CD4-positive, alpha-beta memory T cell (primary cell): ENCODE measurements at regions of chr19 and their contacts with region 1.

Region 1: GRCh38 chr19:52527134-52527955 is at the start of gene ZNF808:
- DNase-seq: peak; percentile 91 to 97 (median 91)
- H3K4me3 ChIP-seq: peak within 1 kb of the TSS; percentile 78 to 98
- H3K4me3 Mint-ChIP-seq: peak within 1 kb of the TSS; percentile 96 to 100 (median 99)
- H3K27ac ChIP-seq: peak within 1 kb of the TSS; percentile 91
- H3K27ac Mint-ChIP-seq: peak within 1 kb of the TSS; percentile 94 to 99 (median 99)
- H3K4me1 ChIP-seq: peaks cover 19% of the 10 kb centered on the region
- H3K4me1 Mint-ChIP-seq: peaks cover 18 to 36% (median 26%) of the 10 kb centered on the region in 4 donors
- H3K27me3 ChIP-seq: no peaks in the 10 kb centered on the region
- H3K27me3 Mint-ChIP-seq: peaks cover 0 to 1% of the 10 kb centered on the region in 2 donors
- total RNA-seq, gene ZNF808: 61.7 to 65.2 TPM

Region 2: GRCh38 chr19:52464798-52465470 is 62.4 kb before region 1 on chr19:
- CTCF ChIA-PET with region 1: no interaction called
- POLR2A ChIA-PET with region 1: no interaction called
- intact Hi-C with region 1: no loop called
- DNase-seq: no peak
- H3K4me3 ChIP-seq: no peak overlapping the region
- H3K4me3 Mint-ChIP-seq: peak overlapping the region in 1 of 8 donors; percentile 5
- H3K27ac ChIP-seq: no peak overlapping the region
- H3K27ac Mint-ChIP-seq: no peak overlapping the region
- H3K4me1 ChIP-seq: no peaks in the 10 kb centered on the region
- H3K4me1 Mint-ChIP-seq: no peaks in the 10 kb centered on the region
- H3K27me3 ChIP-seq: no peaks in the 10 kb centered on the region
- H3K27me3 Mint-ChIP-seq: no peaks in the 10 kb centered on the region

Region 3: GRCh38 chr19:52570000-52570861 is 42.9 kb after region 1 on chr19 and contains the start of gene ZNF701:
- CTCF ChIA-PET with region 1: interaction called, 3 read pairs
- POLR2A ChIA-PET with region 1: no interaction called
- intact Hi-C with region 1: loop called (anchors 1 kb)
- DNase-seq: peak; percentile 95 to 96 (median 95)
- H3K4me3 ChIP-seq: peak within 1 kb of the TSS; percentile 89 to 96
- H3K4me3 Mint-ChIP-seq: peak within 1 kb of the TSS; percentile 91 to 98 (median 96)
- H3K27ac ChIP-seq: peak within 1 kb of the TSS; percentile 67
- H3K27ac Mint-ChIP-seq: peak within 1 kb of the TSS; percentile 83 to 99 (median 97)
- H3K4me1 ChIP-seq: peaks cover 16% of the 10 kb centered on the region
- H3K4me1 Mint-ChIP-seq: peaks cover 16 to 41% (median 34%) of the 10 kb centered on the region in 4 donors
- H3K27me3 ChIP-seq: no peaks in the 10 kb centered on the region
- H3K27me3 Mint-ChIP-seq: no peaks in the 10 kb centered on the region
- total RNA-seq, gene ZNF701: 51.1 to 51.7 TPM

Region 4: DNA sequence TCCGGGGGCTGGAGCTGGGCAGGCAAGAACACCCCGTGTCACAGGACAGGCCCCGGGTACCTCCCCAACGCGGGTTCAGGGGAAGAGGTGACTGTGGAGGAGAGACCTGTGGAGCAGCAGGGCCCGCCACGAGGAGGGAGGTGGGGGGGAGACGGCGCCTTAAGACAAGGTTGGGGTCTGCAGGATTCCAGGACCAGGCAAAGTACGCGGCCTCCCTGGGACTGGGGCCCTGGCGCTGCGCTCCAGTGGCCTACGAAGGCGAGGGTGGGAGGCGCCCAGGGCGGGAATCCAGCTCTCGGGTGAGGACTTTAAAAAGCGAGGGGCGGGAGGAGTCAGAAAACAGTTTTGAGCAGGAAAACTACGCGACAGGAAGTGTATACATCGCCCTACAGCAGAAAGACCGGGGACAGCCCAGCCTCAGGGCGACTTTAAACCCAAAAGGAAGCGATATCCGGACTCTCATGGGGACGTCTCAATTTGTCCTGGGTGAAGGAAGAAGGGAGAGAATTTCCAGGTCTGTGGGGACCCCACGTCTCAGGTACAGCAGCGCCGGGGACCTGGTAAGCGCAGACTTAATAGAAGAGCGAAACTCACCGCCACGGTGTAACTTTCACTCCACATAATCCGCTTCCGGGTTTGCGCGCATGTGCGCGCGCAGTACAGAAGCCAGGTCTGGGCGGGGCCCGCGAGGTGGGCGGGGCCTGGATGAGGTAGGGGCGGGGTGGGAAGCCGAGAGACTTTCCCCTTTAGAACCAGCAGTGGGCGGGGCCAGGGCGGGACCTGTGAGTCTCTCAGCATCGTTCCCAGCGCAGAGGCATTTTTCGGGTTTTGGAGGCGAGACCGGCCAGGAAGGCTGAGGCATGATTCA is 110.6 kb after region 1 on chr19 and contains the start of gene ZNF83:
- CTCF ChIA-PET with region 1: interaction called, 3 read pairs
- POLR2A ChIA-PET with region 1: no interaction called
- intact Hi-C with region 1: loop called (anchors 1 kb)
- DNase-seq: peak; percentile 85 to 95 (median 92)
- H3K4me3 ChIP-seq: peak within 1 kb of the TSS; percentile 72 to 98
- H3K4me3 Mint-ChIP-seq: peak within 1 kb of the TSS; percentile 91 to 99 (median 97)
- H3K27ac ChIP-seq: peak within 1 kb of the TSS; percentile 87
- H3K27ac Mint-ChIP-seq: peak within 1 kb of the TSS; percentile 90 to 99 (median 98)
- H3K4me1 ChIP-seq: peaks cover 20% of the 10 kb centered on the region
- H3K4me1 Mint-ChIP-seq: peaks cover 10 to 23% (median 16%) of the 10 kb centered on the region in 4 donors
- H3K27me3 ChIP-seq: no peaks in the 10 kb centered on the region
- H3K27me3 Mint-ChIP-seq: no peaks in the 10 kb centered on the region
- total RNA-seq, gene ZNF83: 128 to 130 TPM

Region 5: DNA sequence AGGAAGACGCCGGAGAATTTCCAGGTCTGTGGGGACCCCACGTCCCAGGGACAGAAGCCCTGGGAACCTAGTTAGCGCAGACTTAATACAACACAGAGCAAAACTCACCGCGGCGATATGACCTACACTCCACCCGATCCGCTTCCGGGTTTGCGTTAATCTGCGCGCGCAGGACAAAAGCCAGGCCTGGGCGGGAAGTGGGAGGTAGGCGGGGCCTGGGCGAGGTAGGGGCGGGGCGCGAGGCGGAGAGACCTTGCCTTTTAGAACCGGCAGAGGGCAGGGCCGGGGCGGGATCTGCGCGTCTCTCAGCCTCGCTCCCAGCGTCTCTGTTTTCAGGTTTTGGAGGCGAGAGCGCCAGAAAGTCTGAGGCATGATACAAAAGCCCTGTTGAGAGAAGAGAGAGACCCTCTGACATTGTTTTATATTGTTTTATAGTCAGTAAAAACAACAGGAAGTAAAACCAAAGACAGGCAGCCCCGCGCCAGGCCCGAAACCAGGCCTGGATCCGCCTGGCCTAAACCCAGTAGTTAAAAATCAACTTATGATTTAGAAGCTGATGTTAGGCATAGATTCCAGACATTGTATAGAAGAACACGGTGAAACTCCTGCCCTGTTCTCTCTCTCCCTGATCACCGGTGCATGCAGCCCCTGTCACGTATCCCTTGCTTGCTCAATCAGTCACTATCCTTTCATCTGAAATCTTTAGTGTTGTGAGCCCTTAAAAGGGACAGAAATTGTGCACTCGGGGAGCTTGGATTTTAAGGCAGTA is 207.7 kb after region 1 on chr19 and contains the start of gene ZNF611:
- CTCF ChIA-PET with region 1: no interaction called
- POLR2A ChIA-PET with region 1: no interaction called
- intact Hi-C with region 1: loop called (anchors 1 kb)
- DNase-seq: peak; percentile 98 to 99 (median 98)
- H3K4me3 ChIP-seq: peak within 1 kb of the TSS; percentile 94 to 98
- H3K4me3 Mint-ChIP-seq: peak within 1 kb of the TSS; percentile 90 to 97 (median 94)
- H3K27ac ChIP-seq: peak within 1 kb of the TSS; percentile 80
- H3K27ac Mint-ChIP-seq: peak within 1 kb of the TSS; percentile 94 to 98 (median 97)
- H3K4me1 ChIP-seq: peaks cover 22% of the 10 kb centered on the region
- H3K4me1 Mint-ChIP-seq: peaks cover 17 to 34% (median 25%) of the 10 kb centered on the region in 4 donors
- H3K27me3 ChIP-seq: no peaks in the 10 kb centered on the region
- H3K27me3 Mint-ChIP-seq: no peaks in the 10 kb centered on the region
- total RNA-seq, gene ZNF611: 52.8 to 53.7 TPM

Region 6: DNA sequence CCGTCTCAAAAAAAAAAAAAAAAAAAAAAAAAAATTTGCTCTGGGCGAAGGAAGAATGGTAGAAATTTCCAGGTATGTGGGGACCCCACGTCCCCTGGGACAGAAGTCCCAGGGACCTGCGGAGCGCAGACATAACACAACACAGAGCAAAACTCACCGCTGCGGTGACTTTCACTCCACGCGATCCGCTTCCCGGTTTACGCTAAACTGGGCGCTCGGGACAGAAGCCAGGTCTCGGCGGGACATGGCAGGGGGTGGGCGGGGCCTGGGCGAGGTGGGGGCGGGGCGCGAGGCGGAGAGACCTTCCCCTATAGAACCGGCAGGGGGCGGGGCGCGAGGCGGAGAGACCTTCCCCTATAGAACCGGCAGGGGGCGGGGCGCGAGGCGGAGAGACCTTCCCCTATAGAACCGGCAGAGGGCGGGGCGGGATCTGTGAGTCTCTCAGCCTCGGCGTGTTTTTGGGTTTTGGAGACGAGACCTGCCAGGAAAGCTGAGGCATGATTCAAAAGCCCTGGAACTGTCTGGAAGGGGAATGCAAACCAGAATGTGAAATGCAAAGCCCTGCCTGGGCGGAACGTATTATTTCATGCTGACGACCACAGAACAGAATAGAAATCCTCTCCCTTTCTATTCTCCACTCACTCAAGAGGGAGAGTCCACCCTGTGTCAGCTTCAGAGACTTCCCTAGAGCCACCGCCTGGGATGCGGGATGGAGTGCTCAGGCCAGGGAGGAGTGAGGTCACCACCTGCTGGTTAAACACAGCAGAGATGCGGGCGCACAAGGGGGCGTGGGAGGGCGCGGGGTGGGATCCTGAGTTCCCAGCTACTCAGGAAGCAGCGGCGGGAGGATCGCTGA is 466.2 kb after region 1 on chr19:
- CTCF ChIA-PET with region 1: no interaction called
- POLR2A ChIA-PET with region 1: no interaction called
- intact Hi-C with region 1: loop called (anchors 5 kb)
- DNase-seq: peak; percentile 77 to 90 (median 83)
- H3K4me3 ChIP-seq: peak overlapping the region; percentile 49 to 81
- H3K4me3 Mint-ChIP-seq: peak overlapping the region; percentile 69 to 96 (median 90)
- H3K27ac ChIP-seq: no peak overlapping the region
- H3K27ac Mint-ChIP-seq: peak overlapping the region in 6 of 7 donors; percentile 27 to 86 (median 68)
- H3K4me1 ChIP-seq: peaks cover 14% of the 10 kb centered on the region
- H3K4me1 Mint-ChIP-seq: peaks cover 3 to 23% (median 18%) of the 10 kb centered on the region in 4 donors
- H3K27me3 ChIP-seq: no peaks in the 10 kb centered on the region
- H3K27me3 Mint-ChIP-seq: peaks cover 5 to 9% of the 10 kb centered on the region in 2 donors